Posterior cingulate gyrus (tissue), 11 donors: ENCODE measurements at regions of chr6 and their contacts with region 1.

Region 1: DNA sequence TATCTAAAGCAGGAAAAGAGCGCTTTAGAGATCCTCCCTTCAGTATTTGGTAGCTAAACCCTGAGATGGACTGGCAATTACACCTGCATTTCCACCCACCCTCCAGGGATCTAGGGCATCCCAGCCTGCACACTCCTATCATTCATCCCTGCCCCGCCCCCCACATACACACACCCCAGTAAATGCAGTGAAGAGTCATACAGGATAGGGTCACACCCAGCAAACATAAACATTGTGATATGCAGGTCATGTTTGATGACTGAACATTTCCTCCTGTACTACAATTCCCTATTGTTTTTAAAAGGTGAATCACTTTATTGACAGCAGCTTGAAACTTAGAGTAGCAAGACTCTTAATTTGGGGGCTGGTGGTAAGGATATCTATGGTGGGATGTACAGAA is 112.9 kb downstream of the FOXO3 start:
- DNase-seq: no peak

Region 2: GRCh38 chr6:108186226-108186625 is 487.4 kb before region 1 on chr6:
- intact Hi-C with region 1: no loop called
- DNase-seq: no peak

Region 3: GRCh38 chr6:108578595-108579327 is 94.8 kb before region 1 on chr6:
- intact Hi-C with region 1: loop called (anchors 10 kb)
- DNase-seq: no peak